ENCODE measurements at regions of chr2 and their contacts with region 1.

Region 1: GRCh38 chr2:205808486-205809121 is 126.3 kb downstream of the NRP2 start:
- DNase-seq: no peak
- ATAC-seq: no peak
- H3K4me3 ChIP-seq: no peak overlapping the region
- H3K27ac ChIP-seq: no peak overlapping the region
- H3K4me1 ChIP-seq: no peaks in the 10 kb centered on the region
- H3K27me3 ChIP-seq: 0 out of 2 replicates have a peak, but pooled peaks cover 5% of the 10 kb centered on the region
- CTCF ChIP-seq: no peak
- POLR2A ChIP-seq: no peak
- RAD21 ChIP-seq: no peak

Region 2: DNA sequence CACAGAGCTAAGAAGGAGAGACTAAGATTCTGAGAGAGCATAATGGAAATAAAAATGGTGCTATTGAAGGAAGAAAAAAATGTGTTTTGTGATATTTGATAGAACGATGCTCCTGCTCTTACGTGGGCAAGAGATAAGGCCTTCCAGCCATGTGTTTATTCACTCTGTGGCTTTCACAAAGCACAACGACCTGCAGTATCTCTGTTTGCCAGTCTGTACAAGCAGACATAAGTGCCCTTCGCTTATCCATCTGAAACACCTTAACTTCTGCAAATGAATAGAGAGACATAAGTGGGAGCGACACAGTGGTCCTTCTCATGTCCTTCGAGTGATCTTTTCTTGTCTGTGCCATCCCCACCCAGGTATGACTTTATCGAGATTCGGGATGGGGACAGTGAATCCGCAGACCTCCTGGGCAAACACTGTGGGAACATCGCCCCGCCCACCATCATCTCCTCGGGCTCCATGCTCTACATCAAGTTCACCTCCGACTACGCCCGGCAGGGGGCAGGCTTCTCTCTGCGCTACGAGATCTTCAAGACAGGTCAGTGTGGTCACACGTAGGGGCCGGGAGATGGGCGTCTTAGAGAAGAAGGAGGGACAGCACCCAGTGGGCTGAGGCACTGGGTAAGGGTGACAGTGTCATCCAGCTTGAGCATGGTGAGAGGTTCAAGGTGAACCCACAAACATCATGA is 92.6 kb before region 1 on chr2:
- CTCF ChIA-PET with region 1: no interaction called
- POLR2A ChIA-PET with region 1: no interaction called
- RAD21 ChIA-PET with region 1: no interaction called
- intact Hi-C with region 1: loop called (anchors 1 kb)
- DNase-seq: peak; percentile 71
- ATAC-seq: peak; percentile 98
- H3K4me3 ChIP-seq: no peak overlapping the region
- H3K27ac ChIP-seq: no peak overlapping the region
- H3K4me1 ChIP-seq: peaks cover 0 to 5% of the 10 kb centered on the region in 2 experiments; a peak in 1 of 4 replicates
- H3K27me3 ChIP-seq: peaks cover 7% of the 10 kb centered on the region; the same call in 1 of the 2 replicates
- CTCF ChIP-seq: peak; percentile 76 to 86 (median 86)
- POLR2A ChIP-seq: no peak
- RAD21 ChIP-seq: peak; percentile 74

Measured in HCT116 (cell line).